ENCODE measurements at regions of chr11 and their contacts with region 1.

Region 1: GRCh38 chr11:111422494-111423249 is 43.6 kb upstream of the POU2AF1 start:
- DNase-seq: peak; percentile 53
- H3K4me3 Mint-ChIP-seq: no peak overlapping the region
- H3K27ac Mint-ChIP-seq: no peak overlapping the region
- H3K4me1 Mint-ChIP-seq: peaks cover 10% of the 10 kb centered on the region
- H3K27me3 Mint-ChIP-seq: no peaks in the 10 kb centered on the region

Region 2: DNA sequence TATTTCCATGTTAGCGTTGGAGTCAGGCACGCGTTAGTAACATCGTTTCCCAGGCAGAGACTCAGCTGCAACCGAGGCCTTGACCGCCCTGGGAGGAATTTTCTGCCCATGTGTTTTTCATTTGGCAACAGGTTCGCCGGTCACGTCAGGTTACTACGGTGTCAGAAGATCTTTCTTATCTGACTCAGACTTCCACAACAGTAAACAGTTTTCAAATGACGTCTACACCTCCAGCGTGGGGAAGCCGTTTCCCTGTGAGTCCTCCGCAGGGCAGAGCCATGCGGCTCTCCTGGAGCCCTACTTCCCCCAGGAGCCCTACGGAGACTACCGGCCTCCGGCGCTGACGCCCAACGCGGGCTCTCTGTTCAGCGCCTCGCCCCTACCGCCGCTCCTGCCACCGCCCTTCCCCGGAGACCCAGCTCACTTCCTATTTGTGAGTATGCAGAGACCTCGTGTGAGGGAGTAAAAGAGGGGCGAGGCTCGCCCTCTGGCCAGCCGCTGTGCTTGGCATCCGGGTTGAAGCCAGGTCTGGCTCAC is 138.7 kb before region 1 on chr11:
- CTCF ChIA-PET with region 1: interaction called, 19 read pairs
- POLR2A ChIA-PET with region 1: interaction called, 3 read pairs
- DNase-seq: no peak
- H3K4me3 Mint-ChIP-seq: no peak overlapping the region
- H3K27ac Mint-ChIP-seq: no peak overlapping the region
- H3K4me1 Mint-ChIP-seq: no peaks in the 10 kb centered on the region
- H3K27me3 Mint-ChIP-seq: peaks cover 3% of the 10 kb centered on the region

Region 3: GRCh38 chr11:111347723-111348115 is 75.0 kb before region 1 on chr11:
- CTCF ChIA-PET with region 1: no interaction called
- POLR2A ChIA-PET with region 1: no interaction called
- DNase-seq: no peak
- H3K4me3 Mint-ChIP-seq: no peak overlapping the region
- H3K27ac Mint-ChIP-seq: no peak overlapping the region
- H3K4me1 Mint-ChIP-seq: no peaks in the 10 kb centered on the region
- H3K27me3 Mint-ChIP-seq: peaks cover 15% of the 10 kb centered on the region

Region 4: GRCh38 chr11:111408789-111409727 is 13.6 kb before region 1 on chr11:
- CTCF ChIA-PET with region 1: interaction called, 87 read pairs
- POLR2A ChIA-PET with region 1: no interaction called
- DNase-seq: no peak
- H3K4me3 Mint-ChIP-seq: no peak overlapping the region
- H3K27ac Mint-ChIP-seq: no peak overlapping the region
- H3K4me1 Mint-ChIP-seq: peaks cover 10% of the 10 kb centered on the region
- H3K27me3 Mint-ChIP-seq: no peaks in the 10 kb centered on the region

Region 5: GRCh38 chr11:111438846-111439520 is 16.3 kb after region 1 on chr11:
- CTCF ChIA-PET with region 1: interaction called, 14 read pairs
- POLR2A ChIA-PET with region 1: no interaction called
- DNase-seq: no peak
- H3K4me3 Mint-ChIP-seq: no peak overlapping the region
- H3K27ac Mint-ChIP-seq: no peak overlapping the region
- H3K4me1 Mint-ChIP-seq: peaks cover 39% of the 10 kb centered on the region
- H3K27me3 Mint-ChIP-seq: peaks cover 3% of the 10 kb centered on the region

Region 6: GRCh38 chr11:111446404-111447111 is 23.9 kb after region 1 on chr11:
- CTCF ChIA-PET with region 1: interaction called, 12 read pairs
- POLR2A ChIA-PET with region 1: no interaction called
- DNase-seq: peak; percentile 90
- H3K4me3 Mint-ChIP-seq: peak overlapping the region; percentile 10
- H3K27ac Mint-ChIP-seq: peak overlapping the region; percentile 60
- H3K4me1 Mint-ChIP-seq: peaks cover 23% of the 10 kb centered on the region
- H3K27me3 Mint-ChIP-seq: peaks cover 3% of the 10 kb centered on the region

Region 7: DNA sequence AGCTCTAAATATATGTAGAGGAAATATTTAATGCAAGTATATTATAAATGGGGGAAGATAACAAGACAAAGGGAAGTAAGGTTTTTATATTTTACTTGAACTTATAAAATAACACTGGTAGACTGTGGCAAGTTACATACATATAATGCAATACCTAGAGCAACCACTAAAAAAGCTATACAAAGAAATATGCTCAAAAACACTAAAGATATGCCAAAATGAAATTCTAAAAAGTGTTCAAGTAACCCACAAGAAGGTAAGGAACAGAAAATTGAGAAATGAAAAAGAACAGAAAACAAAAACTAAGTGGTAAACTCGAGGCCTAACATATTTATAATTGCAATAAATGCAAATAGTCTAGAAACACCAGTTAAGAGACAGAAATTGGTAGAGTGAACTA is 57.0 kb after region 1 on chr11:
- CTCF ChIA-PET with region 1: no interaction called
- POLR2A ChIA-PET with region 1: no interaction called
- DNase-seq: no peak
- H3K4me3 Mint-ChIP-seq: no peak overlapping the region
- H3K27ac Mint-ChIP-seq: no peak overlapping the region
- H3K4me1 Mint-ChIP-seq: peaks cover 3% of the 10 kb centered on the region
- H3K27me3 Mint-ChIP-seq: peaks cover 37% of the 10 kb centered on the region

Region 8: GRCh38 chr11:111512296-111513239 is 89.9 kb after region 1 on chr11 and contains the start of gene BTG4:
- CTCF ChIA-PET with region 1: no interaction called
- POLR2A ChIA-PET with region 1: no interaction called
- DNase-seq: peak; percentile 29
- H3K4me3 Mint-ChIP-seq: peak within 1 kb of the TSS; percentile 64
- H3K27ac Mint-ChIP-seq: no peak within 1 kb of the TSS
- H3K4me1 Mint-ChIP-seq: peaks cover 18% of the 10 kb centered on the region
- H3K27me3 Mint-ChIP-seq: peaks cover 48% of the 10 kb centered on the region
- total RNA-seq, gene BTG4: not detected

Measured in activated CD4-positive, alpha-beta T cell treated with anti-CD3 and anti-CD28 coated beads, Interleukin-2, amount 10 ng/mL, durations not matched to agents 7 days and 5 days (primary cell).